Spleen (tissue), 13 donors: ENCODE measurements at regions of chr21 and their contacts with region 1.

Region 1: GRCh38 chr21:15729674-15730483 is at the start of gene USP25:
- DNase-seq: peak; percentile 98
- H3K4me3 ChIP-seq: peak within 1 kb of the TSS; percentile 76 to 90 (median 80)
- H3K27ac ChIP-seq: peak within 1 kb of the TSS; percentile 92 to 98 (median 95)
- H3K4me1 ChIP-seq: peaks cover 17 to 50% (median 40%) of the 10 kb centered on the region in 6 donors
- H3K27me3 ChIP-seq: no peaks in the 10 kb centered on the region
- CTCF ChIP-seq: peak in 1 of 11 experiments; percentile 20
- POLR2A ChIP-seq: peak in 2 of 3 donors; percentile 3 to 77
- total RNA-seq, gene USP25: 46.0 to 62.2 (median 59.0) TPM

Region 2: DNA sequence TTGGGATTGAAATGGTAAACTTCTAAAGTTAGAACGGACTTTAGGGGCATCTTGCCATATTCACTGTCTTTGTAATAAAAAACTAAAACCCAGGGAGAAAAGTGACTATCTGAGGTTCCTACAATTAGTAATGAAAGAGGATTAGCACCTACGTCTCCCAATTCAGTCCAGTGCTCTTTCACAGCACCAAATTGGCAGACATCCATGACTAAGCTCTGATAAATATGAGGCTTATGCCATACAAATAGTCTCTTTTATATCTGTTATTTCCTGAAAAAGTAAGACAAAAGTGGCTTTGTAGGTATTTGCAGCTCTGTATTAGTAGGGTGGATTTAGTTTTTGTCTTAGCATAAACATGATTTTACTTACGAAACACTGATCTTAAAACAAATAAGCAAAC is 350.1 kb before region 1 on chr21:
- intact Hi-C with region 1: no loop called
- DNase-seq: no peak
- H3K4me3 ChIP-seq: no peak overlapping the region
- H3K27ac ChIP-seq: no peak overlapping the region
- H3K4me1 ChIP-seq: no peaks in the 10 kb centered on the region
- H3K27me3 ChIP-seq: no peaks in the 10 kb centered on the region
- CTCF ChIP-seq: no peak
- POLR2A ChIP-seq: no peak

Region 3: DNA sequence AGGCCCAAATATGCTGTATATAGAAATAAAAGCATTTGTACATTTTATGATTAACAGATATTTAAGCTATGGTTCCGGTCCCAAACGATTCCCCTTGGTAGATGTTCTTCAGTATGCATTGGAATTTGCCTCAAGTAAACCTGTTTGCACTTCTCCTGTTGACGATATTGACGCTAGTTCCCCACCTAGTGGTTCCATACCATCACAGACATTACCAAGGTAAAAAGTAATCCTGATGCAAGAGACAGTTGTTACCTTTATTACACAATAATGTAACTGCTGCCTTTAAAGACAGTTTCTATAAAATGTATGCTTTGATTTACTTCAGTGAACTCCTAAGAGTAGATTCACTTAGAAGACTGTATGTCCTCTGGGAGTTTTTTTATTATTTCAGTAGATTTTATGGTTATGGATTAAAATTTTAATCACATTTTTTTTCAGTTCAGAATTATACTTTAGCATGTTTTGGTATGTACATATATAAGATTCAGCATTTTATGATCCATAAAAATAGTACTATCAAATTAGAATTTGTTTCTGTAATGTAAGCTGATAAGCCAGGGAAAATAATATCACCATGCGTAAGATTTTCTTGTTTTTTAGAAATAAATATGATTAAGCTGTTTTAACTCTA is 96.4 kb after region 1 on chr21:
- intact Hi-C with region 1: loop called (anchors 10 kb)
- DNase-seq: no peak
- H3K4me3 ChIP-seq: no peak overlapping the region
- H3K27ac ChIP-seq: no peak overlapping the region
- H3K4me1 ChIP-seq: peaks cover 0 to 31% (median 3%) of the 10 kb centered on the region in 6 donors
- H3K27me3 ChIP-seq: no peaks in the 10 kb centered on the region
- CTCF ChIP-seq: peak in 10 of 11 experiments; percentile 14 to 57 (median 48)
- POLR2A ChIP-seq: no peak